Pancreas (tissue), 10 donors: ENCODE measurements at regions of chr11 and their contacts with region 1.

Region 1: DNA sequence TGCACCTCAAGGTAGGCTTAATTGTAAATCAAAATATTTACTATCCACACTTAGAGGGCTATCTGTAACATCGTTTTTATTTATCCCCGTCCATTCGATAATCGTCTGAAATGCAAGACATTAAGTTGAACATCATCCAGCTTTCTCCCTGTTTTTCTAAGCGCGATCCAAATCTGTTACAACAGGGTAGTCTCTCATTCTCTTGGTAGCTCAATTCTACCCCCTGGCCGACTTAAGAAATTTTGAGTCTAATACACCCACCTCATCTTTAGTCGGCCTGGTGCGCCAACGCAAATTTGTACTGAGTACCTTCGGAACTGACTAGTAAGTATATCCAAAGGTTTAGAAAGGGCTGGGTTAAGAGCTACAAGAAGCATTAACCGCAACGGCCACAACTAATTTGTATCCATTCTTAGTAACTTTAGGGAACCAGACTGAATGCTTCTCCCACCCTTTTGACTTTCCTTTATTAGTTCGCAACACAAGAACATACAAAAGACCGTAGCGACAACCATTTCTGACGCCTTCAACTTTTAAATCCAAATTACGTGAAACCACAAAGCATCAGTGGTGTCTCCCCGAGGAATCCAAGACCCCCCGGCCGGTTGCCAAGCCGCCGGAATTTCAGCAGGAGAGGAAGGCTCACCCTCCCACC is 1.0 kb upstream of the ZNF143 start:
- DNase-seq: no peak
- ATAC-seq: no peak
- H3K4me3 ChIP-seq: peak overlapping the region; percentile 68 to 90 (median 81)
- H3K27ac ChIP-seq: peak overlapping the region; percentile 86 to 99 (median 96)
- H3K4me1 ChIP-seq: peaks cover 0 to 16% (median 12%) of the 10 kb centered on the region in 3 donors
- H3K27me3 ChIP-seq: no peaks in the 10 kb centered on the region
- CTCF ChIP-seq: no peak

Region 2: DNA sequence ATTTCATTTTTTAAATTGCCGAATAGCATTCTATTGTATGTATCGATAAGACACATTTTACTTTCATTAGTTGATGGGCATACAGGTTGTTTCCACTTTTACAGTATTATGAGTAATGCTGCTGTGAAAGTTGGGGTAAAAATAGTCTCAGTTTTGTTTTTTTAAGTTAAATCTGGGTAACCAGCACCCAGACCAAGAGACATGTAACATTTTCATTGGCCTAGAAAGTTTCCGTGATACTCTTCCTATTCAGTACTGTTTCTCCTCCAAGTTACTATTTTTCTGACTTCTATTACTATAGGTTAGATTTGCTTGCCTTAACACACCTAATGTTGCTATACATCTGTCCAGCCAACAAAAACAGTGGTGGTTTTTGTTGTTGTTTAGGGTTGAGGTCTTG is 63.0 kb before region 1 on chr11:
- intact Hi-C with region 1: loop called in 1 of 3 experiments (anchors 10 kb)
- DNase-seq: no peak
- ATAC-seq: no peak
- H3K4me3 ChIP-seq: no peak overlapping the region
- H3K27ac ChIP-seq: no peak overlapping the region
- H3K4me1 ChIP-seq: no peaks in the 10 kb centered on the region
- H3K27me3 ChIP-seq: no peaks in the 10 kb centered on the region
- CTCF ChIP-seq: no peak

Region 3: DNA sequence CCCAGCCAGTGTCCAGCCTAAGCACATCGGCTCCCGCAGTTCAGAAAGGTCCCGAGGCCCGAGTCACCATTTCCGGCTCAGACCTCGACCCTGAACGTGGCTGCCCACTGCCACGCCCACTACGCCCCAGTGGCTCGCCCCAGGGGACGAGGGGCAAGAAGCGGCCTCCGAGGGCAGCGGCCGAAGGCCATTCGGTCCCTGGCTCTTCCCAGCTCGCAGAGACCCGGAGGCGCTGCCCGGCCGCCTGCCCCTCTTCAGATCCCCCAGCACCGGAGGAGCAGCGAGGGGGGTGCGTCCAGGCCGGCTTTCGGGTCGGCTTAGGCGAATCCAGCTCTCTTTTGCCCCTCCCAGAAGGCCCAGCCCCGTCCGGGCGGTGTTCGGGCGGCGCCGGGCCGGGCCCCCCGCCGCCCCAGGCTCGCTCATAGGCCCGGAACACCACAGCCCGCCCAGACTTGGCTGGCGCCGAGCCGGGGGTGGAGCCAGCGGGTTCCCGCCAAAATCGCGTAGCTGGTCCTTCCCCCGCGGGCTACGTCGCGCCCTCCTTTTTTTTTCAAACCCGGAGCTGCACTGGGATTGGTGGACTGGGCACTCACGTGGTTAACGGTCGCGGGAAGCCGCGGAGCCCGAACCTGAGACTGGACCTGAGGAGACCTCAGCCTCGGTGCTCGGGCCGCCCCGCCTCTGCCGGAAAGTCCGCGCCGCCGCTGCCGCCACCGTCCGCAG is 113.4 kb after region 1 on chr11 and contains the start of gene WEE1:
- intact Hi-C with region 1: no loop called
- DNase-seq: peak; percentile 98 to 99 (median 99)
- ATAC-seq: peak; percentile 87 to 93 (median 88)
- H3K4me3 ChIP-seq: peak within 1 kb of the TSS; percentile 49 to 79 (median 70)
- H3K27ac ChIP-seq: peak within 1 kb of the TSS; percentile 92 to 98 (median 96)
- H3K4me1 ChIP-seq: peaks cover 16 to 25% (median 22%) of the 10 kb centered on the region in 3 donors
- H3K27me3 ChIP-seq: no peaks in the 10 kb centered on the region
- CTCF ChIP-seq: no peak
- total RNA-seq, gene WEE1: 4.2 to 10.7 (median 6.2) TPM